Activated naive CD4-positive, alpha-beta T cell treated with anti-CD3 and anti-CD28 coated beads for 36 hours (primary cell): ENCODE measurements at regions of chr12 and their contacts with region 1.

Region 1: DNA sequence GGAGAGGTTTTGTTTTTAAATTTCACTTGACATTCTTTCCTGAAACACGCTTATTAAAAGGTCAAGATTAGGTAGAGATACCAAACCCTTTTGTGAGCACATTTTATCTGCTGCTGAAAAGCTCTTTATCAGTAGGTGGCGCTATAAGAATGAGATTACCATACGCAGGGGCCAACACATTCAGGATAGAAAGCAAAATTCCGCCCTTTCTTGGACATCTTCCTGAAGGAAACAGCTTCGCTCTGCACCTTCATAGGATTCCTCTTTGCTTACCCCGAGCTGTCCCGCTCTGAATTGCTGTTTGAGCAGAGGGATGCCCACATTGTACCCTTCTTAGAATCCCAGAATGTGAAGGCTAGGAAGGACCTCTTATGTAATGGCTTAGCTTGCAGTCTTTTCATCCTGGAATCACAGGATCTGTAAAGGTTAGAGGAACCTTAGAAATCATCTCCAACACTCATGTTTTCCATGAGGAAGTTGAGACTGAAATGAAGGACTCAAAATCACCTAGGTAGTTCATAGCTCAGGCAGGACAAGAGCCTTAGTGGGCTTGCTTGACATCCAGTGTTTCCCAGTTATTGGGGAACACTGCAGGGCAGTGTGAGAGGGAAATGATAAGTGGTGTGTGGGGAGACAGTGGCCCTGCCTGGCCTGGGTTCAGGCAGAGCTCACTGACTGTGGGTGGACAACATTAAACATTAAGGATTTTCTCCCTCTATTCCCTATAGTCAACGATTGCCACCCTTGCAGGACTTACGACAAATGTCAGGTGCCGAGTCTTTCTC is 38.7 kb upstream of the CRY1 start:
- DNase-seq: no peak
- H3K4me3 Mint-ChIP-seq: no peak overlapping the region
- H3K27ac Mint-ChIP-seq: no peak overlapping the region
- H3K4me1 Mint-ChIP-seq: no peaks in the 10 kb centered on the region
- H3K27me3 Mint-ChIP-seq: no peaks in the 10 kb centered on the region

Region 2: DNA sequence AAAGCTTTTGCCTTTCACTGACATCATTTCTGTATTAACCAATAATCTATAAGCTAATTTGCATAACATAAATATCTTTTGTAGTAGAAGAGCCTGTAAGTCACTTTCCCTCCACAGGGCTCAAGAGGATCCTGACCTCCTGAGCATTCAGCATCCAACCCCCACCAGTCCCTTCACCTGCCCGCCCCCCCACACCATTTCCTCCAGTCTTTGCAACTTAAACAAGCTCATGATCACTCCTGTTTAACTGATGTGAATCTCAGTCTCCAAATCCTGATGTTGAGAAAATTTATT is 26.7 kb before region 1 on chr12:
- CTCF ChIA-PET with region 1: interaction called, 23 read pairs
- intact Hi-C with region 1: no loop called
- DNase-seq: no peak
- H3K4me3 Mint-ChIP-seq: no peak overlapping the region
- H3K27ac Mint-ChIP-seq: no peak overlapping the region
- H3K4me1 Mint-ChIP-seq: no peaks in the 10 kb centered on the region
- H3K27me3 Mint-ChIP-seq: peaks cover 3% of the 10 kb centered on the region

Region 3: GRCh38 chr12:107115119-107115518 is 16.9 kb before region 1 on chr12:
- CTCF ChIA-PET with region 1: interaction called, 32 read pairs
- intact Hi-C with region 1: no loop called
- DNase-seq: no peak
- H3K4me3 Mint-ChIP-seq: no peak overlapping the region
- H3K27ac Mint-ChIP-seq: no peak overlapping the region
- H3K4me1 Mint-ChIP-seq: no peaks in the 10 kb centered on the region
- H3K27me3 Mint-ChIP-seq: no peaks in the 10 kb centered on the region

Region 4: GRCh38 chr12:107402041-107403022 is 270.3 kb after region 1 on chr12:
- CTCF ChIA-PET with region 1: interaction called, 90 read pairs
- intact Hi-C with region 1: loop called (anchors 1 kb)
- DNase-seq: peak; percentile 85
- H3K4me3 Mint-ChIP-seq: no peak overlapping the region
- H3K27ac Mint-ChIP-seq: no peak overlapping the region
- H3K4me1 Mint-ChIP-seq: peaks cover 14% of the 10 kb centered on the region
- H3K27me3 Mint-ChIP-seq: no peaks in the 10 kb centered on the region

Region 5: GRCh38 chr12:107607464-107608392 is 475.7 kb after region 1 on chr12:
- CTCF ChIA-PET with region 1: interaction called, 267 read pairs
- intact Hi-C with region 1: loop called (anchors 1 kb)
- DNase-seq: peak; percentile 87
- H3K4me3 Mint-ChIP-seq: no peak overlapping the region
- H3K27ac Mint-ChIP-seq: no peak overlapping the region
- H3K4me1 Mint-ChIP-seq: no peaks in the 10 kb centered on the region
- H3K27me3 Mint-ChIP-seq: no peaks in the 10 kb centered on the region

Region 6: GRCh38 chr12:107670999-107671643 is 539.1 kb after region 1 on chr12:
- CTCF ChIA-PET with region 1: interaction called, 5 read pairs
- intact Hi-C with region 1: loop called (anchors 5 kb)
- DNase-seq: peak; percentile 60
- H3K4me3 Mint-ChIP-seq: no peak overlapping the region
- H3K27ac Mint-ChIP-seq: no peak overlapping the region
- H3K4me1 Mint-ChIP-seq: peaks cover 4% of the 10 kb centered on the region
- H3K27me3 Mint-ChIP-seq: peaks cover 6% of the 10 kb centered on the region

Region 7: DNA sequence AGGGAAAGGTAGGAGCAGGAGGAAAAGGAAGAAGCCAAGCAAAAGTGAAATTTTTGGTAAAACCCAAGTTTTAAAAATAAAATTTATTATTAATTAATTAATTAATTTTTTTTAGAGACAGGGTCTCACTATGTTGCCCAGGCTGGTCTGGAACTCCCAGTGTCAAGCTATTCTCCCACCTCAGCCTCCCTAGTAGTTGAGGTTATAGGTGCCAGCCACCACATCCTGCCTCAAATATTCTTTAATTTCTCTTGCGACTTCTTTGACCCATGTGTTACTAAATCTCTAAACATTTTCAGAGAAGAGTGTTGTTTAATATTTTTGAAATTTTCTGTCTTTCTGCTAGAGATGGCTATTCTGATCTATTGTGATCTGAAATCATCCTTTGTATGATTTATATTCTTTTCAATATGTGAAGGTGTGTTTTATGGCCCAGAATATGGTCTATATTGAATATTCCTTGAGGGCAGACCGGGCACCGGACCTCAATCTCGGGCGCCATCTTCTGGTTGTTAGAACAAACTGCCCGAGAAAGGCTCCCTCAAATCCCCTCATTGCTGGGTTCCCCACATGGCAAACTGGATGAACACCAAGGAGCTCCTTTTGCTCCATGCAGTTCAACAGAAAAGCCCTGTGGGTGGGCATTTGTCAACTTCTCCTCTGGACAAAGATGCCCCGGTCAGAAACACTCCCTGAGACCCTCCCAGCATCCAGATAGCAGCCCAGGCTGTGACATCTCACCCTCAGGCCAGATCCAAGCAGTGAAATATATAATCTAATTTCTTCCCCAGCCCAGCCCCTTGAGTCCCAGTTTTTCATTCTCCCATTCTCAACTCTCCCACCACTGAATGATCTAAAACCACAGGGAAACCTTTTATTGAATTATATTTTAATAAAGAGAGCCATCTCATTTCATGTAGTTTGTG is 753.0 kb after region 1 on chr12:
- CTCF ChIA-PET with region 1: no interaction called
- intact Hi-C with region 1: loop called (anchors 2 kb)
- DNase-seq: peak; percentile 64
- H3K4me3 Mint-ChIP-seq: no peak overlapping the region
- H3K27ac Mint-ChIP-seq: no peak overlapping the region
- H3K4me1 Mint-ChIP-seq: no peaks in the 10 kb centered on the region
- H3K27me3 Mint-ChIP-seq: peaks cover 16% of the 10 kb centered on the region

Region 8: GRCh38 chr12:108446766-108447165 is 1314.7 kb after region 1 on chr12:
- CTCF ChIA-PET with region 1: no interaction called
- intact Hi-C with region 1: no loop called
- DNase-seq: no peak
- H3K4me3 Mint-ChIP-seq: no peak overlapping the region
- H3K27ac Mint-ChIP-seq: no peak overlapping the region
- H3K4me1 Mint-ChIP-seq: no peaks in the 10 kb centered on the region
- H3K27me3 Mint-ChIP-seq: peaks cover 12% of the 10 kb centered on the region